Naive thymus-derived CD4-positive, alpha-beta T cell (primary cell): ENCODE measurements at regions of chr2 and their contacts with region 1.

Region 1: DNA sequence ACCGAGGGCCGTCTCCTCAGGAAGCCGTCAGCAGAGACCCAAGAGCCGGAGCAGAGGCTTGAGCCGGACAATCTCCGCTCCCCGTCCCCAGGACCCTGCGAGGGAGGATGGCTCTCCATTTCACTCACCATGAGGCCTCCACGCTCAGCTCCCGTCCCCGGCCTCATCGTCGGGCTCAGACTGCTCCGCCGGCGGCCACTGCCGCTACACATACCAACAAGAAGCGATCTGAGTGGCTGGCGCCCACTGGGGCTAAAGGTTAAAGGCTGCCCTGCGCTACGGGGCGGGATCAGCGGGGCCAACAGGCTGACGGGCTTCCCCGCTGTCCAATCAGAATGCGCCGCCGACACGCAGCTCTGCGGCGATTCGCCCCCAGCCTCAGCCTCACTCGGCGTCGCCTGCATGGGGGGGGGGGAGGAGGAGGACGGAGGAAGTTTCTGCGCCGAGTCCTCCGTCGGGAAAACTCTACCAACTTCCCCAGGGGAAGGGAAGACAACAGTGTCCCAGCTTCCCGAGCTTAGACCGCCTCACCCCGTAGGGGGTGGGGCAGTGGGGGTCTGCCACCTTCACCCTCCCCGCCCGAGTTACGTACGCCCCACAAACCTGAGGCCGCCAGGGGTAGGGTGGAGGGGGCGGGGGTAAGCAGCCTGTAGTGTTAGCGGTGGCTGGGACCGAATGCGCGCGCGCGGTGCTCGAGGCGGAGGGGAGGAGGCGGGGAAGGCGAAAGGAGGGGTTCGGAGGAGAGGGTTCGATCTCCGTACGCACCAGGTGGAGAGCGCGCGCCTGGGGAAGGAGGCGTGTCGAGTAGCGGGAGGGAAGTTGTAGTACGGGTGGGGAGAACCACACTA is at the start of gene PRPF40A:
- DNase-seq: peak; percentile 97 to 99 (median 98)
- ATAC-seq: peak; percentile 83
- H3K4me3 ChIP-seq: peak within 1 kb of the TSS; percentile 98
- H3K4me3 Mint-ChIP-seq: peak within 1 kb of the TSS; percentile 97 to 100 (median 99)
- H3K27ac ChIP-seq: peak within 1 kb of the TSS; percentile 93
- H3K27ac Mint-ChIP-seq: peak within 1 kb of the TSS; percentile 97 to 100 (median 99)
- H3K4me1 ChIP-seq: peaks cover 21 to 35% of the 10 kb centered on the region in 2 donors
- H3K4me1 Mint-ChIP-seq: peaks cover 47 to 84% (median 73%) of the 10 kb centered on the region in 7 donors
- H3K27me3 ChIP-seq: no peaks in the 10 kb centered on the region
- H3K27me3 Mint-ChIP-seq: no peaks in the 10 kb centered on the region
- total RNA-seq, gene PRPF40A: 104 to 126 (median 109) TPM

Region 2: GRCh38 chr2:151261231-151261976 is 1456.0 kb before region 1 on chr2 and contains the start of gene RBM43:
- CTCF ChIA-PET with region 1: no interaction called
- POLR2A ChIA-PET with region 1: interaction called, 4 read pairs
- intact Hi-C with region 1: loop called (anchors 2 to 5 kb)
- DNase-seq: peak; percentile 56 to 86 (median 80)
- ATAC-seq: peak; percentile 91
- H3K4me3 ChIP-seq: peak within 1 kb of the TSS; percentile 87
- H3K4me3 Mint-ChIP-seq: peak within 1 kb of the TSS; percentile 85 to 98 (median 96)
- H3K27ac ChIP-seq: peak within 1 kb of the TSS; percentile 96
- H3K27ac Mint-ChIP-seq: peak within 1 kb of the TSS; percentile 90 to 99 (median 99)
- H3K4me1 ChIP-seq: no peaks in the 10 kb centered on the region
- H3K4me1 Mint-ChIP-seq: peaks cover 11 to 47% (median 31%) of the 10 kb centered on the region in 7 donors
- H3K27me3 ChIP-seq: no peaks in the 10 kb centered on the region
- H3K27me3 Mint-ChIP-seq: no peaks in the 10 kb centered on the region
- total RNA-seq, gene RBM43: 6.4 to 19.2 (median 15.7) TPM

Region 3: GRCh38 chr2:151409601-151410484 is 1307.6 kb before region 1 on chr2 and contains the start of gene RIF1:
- CTCF ChIA-PET with region 1: no interaction called
- POLR2A ChIA-PET with region 1: no interaction called
- intact Hi-C with region 1: loop called (anchors 2 to 5 kb)
- DNase-seq: peak; percentile 65 to 78 (median 69)
- ATAC-seq: peak; percentile 95
- H3K4me3 ChIP-seq: peak within 1 kb of the TSS; percentile 73
- H3K4me3 Mint-ChIP-seq: peak within 1 kb of the TSS; percentile 91 to 99 (median 96)
- H3K27ac ChIP-seq: peak within 1 kb of the TSS; percentile 89
- H3K27ac Mint-ChIP-seq: peak within 1 kb of the TSS; percentile 88 to 98 (median 95)
- H3K4me1 ChIP-seq: peaks cover 6 to 14% of the 10 kb centered on the region in 2 donors
- H3K4me1 Mint-ChIP-seq: peaks cover 12 to 43% (median 35%) of the 10 kb centered on the region in 7 donors
- H3K27me3 ChIP-seq: no peaks in the 10 kb centered on the region
- H3K27me3 Mint-ChIP-seq: peaks cover 0 to 3% (median 0%) of the 10 kb centered on the region in 5 donors
- total RNA-seq, gene RIF1: 39.8 to 74.0 (median 66.7) TPM

Region 4: DNA sequence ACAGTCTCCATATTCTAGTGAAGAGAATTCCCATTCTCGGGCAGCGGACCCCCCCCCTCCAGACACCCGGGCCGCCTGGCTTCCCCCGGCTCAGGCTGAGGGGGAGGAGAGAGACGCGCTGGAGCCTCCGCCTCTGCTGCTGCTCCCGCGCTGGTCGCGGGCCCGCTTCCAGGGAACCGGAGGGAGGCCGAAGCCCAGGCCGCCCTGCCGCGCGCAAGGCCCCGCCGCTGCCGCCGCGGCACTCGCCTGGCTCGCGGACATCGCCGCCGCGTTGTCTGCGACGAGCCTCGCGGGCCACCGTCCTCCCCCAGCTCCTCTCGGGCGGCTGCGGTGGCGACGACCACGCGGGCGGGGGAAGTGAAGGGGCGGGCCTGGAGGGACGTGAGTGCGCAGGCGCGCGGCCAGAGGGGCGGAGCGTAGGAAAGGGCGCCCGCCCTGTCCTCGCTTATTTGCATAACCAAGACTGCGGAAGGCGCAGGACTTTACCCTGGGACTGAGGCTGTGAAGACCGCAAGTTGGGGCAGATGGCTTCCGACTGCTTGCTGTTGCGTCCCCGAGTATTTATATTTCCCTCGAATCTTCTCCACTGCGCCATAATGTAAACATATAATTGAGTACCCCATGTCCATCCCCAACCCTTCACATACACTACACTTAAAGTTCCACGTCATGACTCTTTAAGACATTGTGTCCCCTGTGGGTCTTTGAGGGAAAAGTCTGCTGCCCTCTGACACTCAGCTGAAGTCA is 889.1 kb before region 1 on chr2 and contains the start of gene ARL5A:
- CTCF ChIA-PET with region 1: no interaction called
- POLR2A ChIA-PET with region 1: no interaction called
- intact Hi-C with region 1: loop called (anchors 1 kb)
- DNase-seq: peak; percentile 89 to 98 (median 96)
- ATAC-seq: peak; percentile 97
- H3K4me3 ChIP-seq: peak within 1 kb of the TSS; percentile 93
- H3K4me3 Mint-ChIP-seq: peak within 1 kb of the TSS; percentile 84 to 97 (median 92)
- H3K27ac ChIP-seq: peak within 1 kb of the TSS; percentile 87
- H3K27ac Mint-ChIP-seq: peak within 1 kb of the TSS; percentile 90 to 96 (median 92)
- H3K4me1 ChIP-seq: peaks cover 18 to 26% of the 10 kb centered on the region in 2 donors
- H3K4me1 Mint-ChIP-seq: peaks cover 30 to 52% (median 40%) of the 10 kb centered on the region in 7 donors
- H3K27me3 ChIP-seq: no peaks in the 10 kb centered on the region
- H3K27me3 Mint-ChIP-seq: peaks cover 0 to 6% (median 0%) of the 10 kb centered on the region in 5 donors
- total RNA-seq, gene ARL5A: 25.8 to 43.3 (median 32.3) TPM

Region 5: GRCh38 chr2:152298754-152299153 is 418.7 kb before region 1 on chr2:
- CTCF ChIA-PET with region 1: no interaction called
- POLR2A ChIA-PET with region 1: no interaction called
- intact Hi-C with region 1: no loop called
- DNase-seq: no peak
- ATAC-seq: no peak
- H3K4me3 ChIP-seq: no peak overlapping the region
- H3K4me3 Mint-ChIP-seq: no peak overlapping the region
- H3K27ac ChIP-seq: no peak overlapping the region
- H3K27ac Mint-ChIP-seq: no peak overlapping the region
- H3K4me1 ChIP-seq: no peaks in the 10 kb centered on the region
- H3K4me1 Mint-ChIP-seq: no peaks in the 10 kb centered on the region
- H3K27me3 ChIP-seq: no peaks in the 10 kb centered on the region
- H3K27me3 Mint-ChIP-seq: peaks cover 6 to 34% (median 12%) of the 10 kb centered on the region in 5 donors

Region 6: DNA sequence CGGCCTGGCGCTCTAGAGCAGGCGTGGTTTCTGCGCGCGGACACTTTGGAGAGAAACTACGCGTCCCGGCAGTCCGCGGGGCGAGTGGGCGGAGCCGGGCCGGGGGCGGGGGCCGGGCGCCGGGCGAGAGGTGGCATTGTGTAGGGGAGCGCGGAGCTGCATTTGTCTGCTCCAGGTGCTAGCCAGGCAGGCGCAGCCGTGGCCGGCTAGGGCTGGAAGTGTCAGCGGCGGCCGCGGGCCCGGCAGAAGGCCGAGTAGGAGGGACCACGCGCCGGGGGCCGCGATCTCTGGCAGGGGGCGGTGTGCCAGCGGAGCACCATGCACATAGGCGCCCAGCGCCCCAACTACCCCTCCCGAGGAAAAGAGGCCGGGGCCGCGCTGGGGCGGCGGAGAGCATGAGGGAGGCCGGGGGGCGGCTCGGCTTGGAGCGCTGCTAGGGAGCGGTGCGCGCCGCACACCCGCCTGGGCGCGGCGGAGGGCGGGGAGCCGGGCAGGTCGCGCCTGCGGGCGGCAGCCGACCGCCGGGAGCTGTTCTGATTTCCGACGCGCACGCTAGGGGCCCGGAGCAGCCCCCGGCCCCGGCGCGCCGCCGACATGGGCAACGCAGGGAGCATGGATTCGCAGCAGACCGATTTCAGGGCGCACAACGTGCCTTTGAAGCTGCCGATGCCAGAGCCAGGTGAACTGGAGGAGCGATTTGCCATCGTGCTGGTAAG is 382.3 kb before region 1 on chr2 and contains the start of gene FMNL2:
- CTCF ChIA-PET with region 1: no interaction called
- POLR2A ChIA-PET with region 1: no interaction called
- intact Hi-C with region 1: loop called in 1 of 2 experiments (anchors 1 kb)
- DNase-seq: peak in 6 of 9 donors; percentile 2 to 74 (median 24)
- ATAC-seq: peak; percentile 77
- H3K4me3 ChIP-seq: peak within 1 kb of the TSS; percentile 24
- H3K4me3 Mint-ChIP-seq: peak within 1 kb of the TSS; percentile 72 to 93 (median 86)
- H3K27ac ChIP-seq: no peak within 1 kb of the TSS
- H3K27ac Mint-ChIP-seq: no peak within 1 kb of the TSS
- H3K4me1 ChIP-seq: no peaks in the 10 kb centered on the region
- H3K4me1 Mint-ChIP-seq: peaks cover 5 to 20% (median 14%) of the 10 kb centered on the region in 7 donors
- H3K27me3 ChIP-seq: peaks cover 0 to 8% of the 10 kb centered on the region in 2 donors
- H3K27me3 Mint-ChIP-seq: peaks cover 55 to 70% (median 59%) of the 10 kb centered on the region in 5 donors
- total RNA-seq, gene FMNL2: 0.66 to 2.7 (median 1.7) TPM

Region 7: GRCh38 chr2:152694161-152694661 is 23.2 kb before region 1 on chr2:
- CTCF ChIA-PET with region 1: no interaction called
- POLR2A ChIA-PET with region 1: interaction called, 11 read pairs
- intact Hi-C with region 1: loop called (anchors 1 kb)
- DNase-seq: peak in 5 of 9 donors; percentile 13 to 30 (median 21)
- ATAC-seq: peak; percentile 84
- H3K4me3 ChIP-seq: peak overlapping the region; percentile 34
- H3K4me3 Mint-ChIP-seq: peak overlapping the region; percentile 58 to 87 (median 82)
- H3K27ac ChIP-seq: peak overlapping the region; percentile 61
- H3K27ac Mint-ChIP-seq: peak overlapping the region; percentile 76 to 98 (median 88)
- H3K4me1 ChIP-seq: peaks cover 5 to 7% of the 10 kb centered on the region in 2 donors
- H3K4me1 Mint-ChIP-seq: peaks cover 14 to 52% (median 37%) of the 10 kb centered on the region in 7 donors
- H3K27me3 ChIP-seq: no peaks in the 10 kb centered on the region
- H3K27me3 Mint-ChIP-seq: no peaks in the 10 kb centered on the region

Region 8: DNA sequence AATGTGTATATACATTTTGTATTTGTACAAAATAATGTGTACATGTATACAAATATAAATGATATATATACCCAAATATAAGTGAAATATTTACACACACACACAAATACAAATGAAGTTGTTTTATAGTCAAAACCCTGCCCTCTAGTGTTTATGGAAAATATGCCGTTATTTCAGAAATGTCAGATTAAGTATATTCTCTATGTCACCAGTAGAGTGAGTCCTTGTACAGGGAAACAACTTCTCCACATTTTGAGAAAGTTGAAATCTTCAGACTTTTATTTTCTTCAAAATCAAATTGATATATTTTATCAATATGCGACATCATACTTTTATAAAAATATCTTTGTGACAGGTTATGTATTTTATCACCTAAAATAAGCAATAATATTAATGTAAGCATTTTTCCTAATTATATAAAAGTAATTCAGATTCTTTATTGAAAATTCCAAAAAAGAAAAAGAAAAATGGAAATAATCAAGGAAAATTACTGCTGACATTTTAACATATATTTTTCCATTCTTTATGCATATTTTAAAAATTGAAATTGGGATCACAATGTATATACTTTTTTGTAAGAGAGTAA is 23.4 kb after region 1 on chr2:
- CTCF ChIA-PET with region 1: interaction called, 4 read pairs
- POLR2A ChIA-PET with region 1: no interaction called
- intact Hi-C with region 1: loop called (anchors 1 kb)
- DNase-seq: peak in 7 of 9 donors; percentile 13 to 53 (median 51)
- ATAC-seq: peak; percentile 93
- H3K4me3 ChIP-seq: no peak overlapping the region
- H3K4me3 Mint-ChIP-seq: no peak overlapping the region
- H3K27ac ChIP-seq: no peak overlapping the region
- H3K27ac Mint-ChIP-seq: no peak overlapping the region
- H3K4me1 ChIP-seq: no peaks in the 10 kb centered on the region
- H3K4me1 Mint-ChIP-seq: peaks cover 0 to 9% (median 3%) of the 10 kb centered on the region in 7 donors
- H3K27me3 ChIP-seq: no peaks in the 10 kb centered on the region
- H3K27me3 Mint-ChIP-seq: no peaks in the 10 kb centered on the region

Region 9: GRCh38 chr2:153059338-153060068 is 342.1 kb after region 1 on chr2:
- CTCF ChIA-PET with region 1: no interaction called
- POLR2A ChIA-PET with region 1: no interaction called
- intact Hi-C with region 1: no loop called
- DNase-seq: no peak
- ATAC-seq: no peak
- H3K4me3 ChIP-seq: no peak overlapping the region
- H3K4me3 Mint-ChIP-seq: no peak overlapping the region
- H3K27ac ChIP-seq: no peak overlapping the region
- H3K27ac Mint-ChIP-seq: no peak overlapping the region
- H3K4me1 ChIP-seq: no peaks in the 10 kb centered on the region
- H3K4me1 Mint-ChIP-seq: no peaks in the 10 kb centered on the region
- H3K27me3 ChIP-seq: no peaks in the 10 kb centered on the region
- H3K27me3 Mint-ChIP-seq: peaks cover 0 to 5% (median 0%) of the 10 kb centered on the region in 5 donors

Region 10: GRCh38 chr2:153235516-153235915 is 518.1 kb after region 1 on chr2:
- CTCF ChIA-PET with region 1: no interaction called
- POLR2A ChIA-PET with region 1: no interaction called
- intact Hi-C with region 1: no loop called
- DNase-seq: peak in 1 of 9 donors; percentile 17
- ATAC-seq: peak; percentile 81
- H3K4me3 ChIP-seq: no peak overlapping the region
- H3K4me3 Mint-ChIP-seq: peak overlapping the region in 4 of 10 donors; percentile 3 to 48 (median 20)
- H3K27ac ChIP-seq: no peak overlapping the region
- H3K27ac Mint-ChIP-seq: peak overlapping the region in 1 of 9 donors; percentile 62
- H3K4me1 ChIP-seq: peaks cover 0 to 8% of the 10 kb centered on the region in 2 donors
- H3K4me1 Mint-ChIP-seq: peaks cover 0 to 15% (median 7%) of the 10 kb centered on the region in 7 donors
- H3K27me3 ChIP-seq: no peaks in the 10 kb centered on the region
- H3K27me3 Mint-ChIP-seq: no peaks in the 10 kb centered on the region